Ovary (tissue), 10 donors: ENCODE measurements at regions of chr17 and their contacts with region 1.

Region 1: GRCh38 chr17:65809366-65809765 is 247.9 kb upstream of the AXIN2 start:
- DNase-seq: no peak
- H3K4me3 ChIP-seq: no peak overlapping the region
- H3K27ac ChIP-seq: no peak overlapping the region
- H3K4me1 ChIP-seq: no peaks in the 10 kb centered on the region
- H3K27me3 ChIP-seq: no peaks in the 10 kb centered on the region
- CTCF ChIP-seq: no peak
- EP300 ChIP-seq: no peak
- POLR2A ChIP-seq: no peak

Region 2: GRCh38 chr17:65485376-65486299 is 323.7 kb before region 1 on chr17:
- intact Hi-C with region 1: loop called in 1 of 4 experiments (anchors 10 kb)
- DNase-seq: peak in 3 of 5 donors; percentile 14 to 48 (median 35)
- H3K4me3 ChIP-seq: no peak overlapping the region
- H3K27ac ChIP-seq: no peak overlapping the region
- H3K4me1 ChIP-seq: no peaks in the 10 kb centered on the region
- H3K27me3 ChIP-seq: no peaks in the 10 kb centered on the region
- CTCF ChIP-seq: no peak
- EP300 ChIP-seq: no peak
- POLR2A ChIP-seq: no peak

Region 3: GRCh38 chr17:65723059-65723384 is 86.3 kb before region 1 on chr17:
- intact Hi-C with region 1: no loop called
- DNase-seq: no peak
- H3K4me3 ChIP-seq: no peak overlapping the region
- H3K27ac ChIP-seq: no peak overlapping the region
- H3K4me1 ChIP-seq: no peaks in the 10 kb centered on the region
- H3K27me3 ChIP-seq: no peaks in the 10 kb centered on the region
- CTCF ChIP-seq: no peak
- EP300 ChIP-seq: no peak
- POLR2A ChIP-seq: no peak